PC-9 (cell line): ENCODE measurements at regions of chr1 and their contacts with region 1.

Region 1: DNA sequence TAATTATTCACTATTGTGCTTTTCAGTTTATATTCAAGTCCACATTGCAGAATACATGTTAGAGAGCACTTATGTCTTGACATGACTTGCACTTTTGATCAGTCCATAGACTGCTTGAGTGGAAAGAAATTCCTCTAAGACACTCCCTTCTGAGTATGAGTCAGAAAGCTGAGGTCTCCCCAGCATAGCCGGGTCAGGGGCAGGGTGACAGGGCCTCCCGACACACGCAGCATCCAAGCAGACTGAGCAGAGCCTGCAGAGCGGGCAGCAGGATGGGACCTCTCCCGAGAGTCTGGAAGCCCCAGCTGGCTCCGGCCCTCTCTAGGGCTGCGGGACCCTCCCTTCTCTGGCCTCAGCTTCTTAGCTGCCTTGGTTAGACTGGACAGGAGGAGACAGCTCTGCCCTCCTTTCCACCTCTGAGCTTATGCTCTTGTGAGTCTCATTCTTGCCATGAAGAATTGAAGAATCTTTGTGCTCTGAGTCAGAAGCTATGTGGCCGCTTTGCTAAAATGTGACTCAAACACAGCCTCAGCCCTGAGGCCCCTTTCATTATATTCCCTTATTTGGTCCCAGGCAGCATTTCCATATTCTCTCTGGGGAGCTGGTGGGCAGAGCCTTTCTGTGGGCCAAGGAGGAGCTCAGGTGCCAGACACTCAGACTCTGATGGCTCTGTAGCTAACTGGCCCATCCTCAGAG is 11.2 kb upstream of the CAPN2 start:
- DNase-seq: peak; percentile 91 to 97
- H3K4me3 ChIP-seq: peak overlapping the region; percentile 47; the same call in 1 of the 2 replicates
- H3K27ac ChIP-seq: peak overlapping the region; percentile 100
- H3K4me1 ChIP-seq: peaks cover 75% of the 10 kb centered on the region
- H3K27me3 ChIP-seq: no peaks in the 10 kb centered on the region
- CTCF ChIP-seq: no peak

Region 2: DNA sequence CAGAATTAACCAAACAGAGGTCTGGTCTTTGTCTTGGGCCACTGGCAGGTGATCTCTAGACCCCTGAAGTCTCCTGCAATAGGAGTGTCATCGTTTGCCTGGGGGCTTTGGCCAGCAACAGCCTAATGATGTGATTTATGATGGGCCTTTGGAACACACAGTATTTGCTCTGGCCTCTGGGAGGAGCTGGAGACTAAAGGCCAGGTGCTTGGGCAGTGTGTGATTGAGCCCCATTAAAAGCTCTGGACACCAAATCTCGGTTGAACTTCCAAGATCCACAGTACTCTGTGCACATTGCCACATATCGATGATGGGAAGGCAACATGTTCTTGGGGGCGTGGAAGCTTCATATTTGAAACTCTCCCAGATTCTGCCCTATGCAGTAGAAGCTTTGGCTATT is 526.1 kb before region 1 on chr1:
- CTCF ChIA-PET with region 1: no interaction called
- POLR2A ChIA-PET with region 1: no interaction called
- intact Hi-C with region 1: no loop called
- DNase-seq: no peak
- H3K4me3 ChIP-seq: no peak overlapping the region
- H3K27ac ChIP-seq: no peak overlapping the region
- H3K4me1 ChIP-seq: peaks cover 16% of the 10 kb centered on the region
- H3K27me3 ChIP-seq: no peaks in the 10 kb centered on the region
- CTCF ChIP-seq: peak; percentile 50

Region 3: DNA sequence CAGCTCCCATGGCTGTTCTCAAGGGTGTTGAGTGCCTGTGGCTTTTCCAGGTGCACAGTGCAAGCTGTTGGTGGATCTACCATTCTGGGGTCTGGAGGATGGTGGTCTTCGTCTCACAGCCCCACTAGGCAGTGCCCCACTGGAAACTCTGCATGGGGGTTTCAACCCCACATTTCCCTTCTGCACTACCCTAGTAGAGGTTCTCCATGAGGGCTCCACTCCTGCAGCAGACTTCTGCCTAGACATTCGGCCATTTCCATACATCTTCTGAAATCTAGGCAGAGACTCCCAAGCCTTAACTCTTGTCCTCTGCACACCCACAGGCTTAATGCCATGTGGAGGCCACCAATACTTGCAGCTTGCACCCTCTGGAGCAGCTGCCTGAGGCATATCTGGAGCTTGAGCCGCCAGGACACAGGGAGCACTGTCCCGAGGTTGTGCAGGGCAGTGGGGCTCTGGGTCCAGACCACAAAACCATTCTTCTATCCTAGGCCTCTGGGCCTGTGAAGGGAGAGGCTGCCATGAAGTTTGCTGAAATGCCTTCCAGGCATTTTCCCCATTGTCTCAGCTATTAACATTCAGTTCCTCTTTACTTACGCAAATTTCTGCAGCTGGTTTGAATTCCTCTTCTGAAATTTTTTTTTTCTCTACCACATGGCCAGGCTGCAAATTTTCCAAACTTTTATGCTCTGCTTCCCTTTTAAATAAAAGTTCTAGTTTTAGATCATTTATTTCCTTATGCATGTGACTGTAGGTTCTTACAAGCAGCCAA is 26.8 kb before region 1 on chr1:
- CTCF ChIA-PET with region 1: no interaction called
- POLR2A ChIA-PET with region 1: no interaction called
- intact Hi-C with region 1: no loop called
- DNase-seq: no peak
- H3K4me3 ChIP-seq: no peak overlapping the region
- H3K27ac ChIP-seq: no peak overlapping the region
- H3K4me1 ChIP-seq: peaks cover 20% of the 10 kb centered on the region
- H3K27me3 ChIP-seq: no peaks in the 10 kb centered on the region
- CTCF ChIP-seq: no peak

Region 4: DNA sequence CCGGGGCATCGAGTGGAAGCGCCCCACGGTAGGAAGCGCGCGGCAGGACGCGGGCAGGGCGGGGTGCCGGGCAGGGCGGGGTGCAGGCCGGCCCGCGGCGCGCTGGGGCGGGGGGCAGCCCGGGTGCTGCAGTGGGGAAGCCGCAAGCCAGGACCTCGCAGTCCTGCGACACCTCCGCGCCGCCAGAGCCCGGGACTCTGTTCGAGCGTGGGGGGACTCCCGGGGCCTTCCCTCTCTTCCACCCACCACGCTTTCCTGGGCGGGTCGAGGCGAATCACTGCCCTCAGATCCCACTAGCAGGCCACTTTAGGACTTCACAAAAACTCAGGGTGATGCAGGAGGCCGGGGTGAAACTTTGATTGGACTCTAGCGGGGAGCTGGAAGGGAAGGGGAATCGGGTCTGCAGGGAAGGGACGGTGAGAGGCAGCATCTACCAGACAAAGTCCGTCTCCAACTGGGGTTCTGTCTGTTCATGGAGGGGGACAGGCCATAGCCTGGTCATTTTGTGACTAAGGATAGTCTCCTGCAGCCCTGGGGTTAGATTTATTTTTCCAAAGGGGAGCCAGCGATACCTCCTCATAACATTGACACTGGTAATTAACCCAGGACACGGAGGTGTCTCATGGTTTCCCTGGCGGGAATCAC is 11.9 kb after region 1 on chr1:
- CTCF ChIA-PET with region 1: interaction called, 6 read pairs
- POLR2A ChIA-PET with region 1: interaction called, 12 read pairs
- intact Hi-C with region 1: loop called (anchors 1 kb)
- DNase-seq: peak in 1 of 2 experiments; percentile 32
- H3K4me3 ChIP-seq: peak overlapping the region; percentile 79
- H3K27ac ChIP-seq: peak overlapping the region; percentile 92
- H3K4me1 ChIP-seq: peaks cover 78% of the 10 kb centered on the region
- H3K27me3 ChIP-seq: no peaks in the 10 kb centered on the region
- CTCF ChIP-seq: no peak

Region 5: GRCh38 chr1:223732992-223733798 is 32.1 kb after region 1 on chr1:
- CTCF ChIA-PET with region 1: interaction called, 4 read pairs
- POLR2A ChIA-PET with region 1: interaction called, 13 read pairs
- intact Hi-C with region 1: no loop called
- DNase-seq: no peak
- H3K4me3 ChIP-seq: no peak overlapping the region
- H3K27ac ChIP-seq: 0 out of 2 replicates have a peak overlapping the region, but pooled peaks have one; percentile 12
- H3K4me1 ChIP-seq: peaks cover 37% of the 10 kb centered on the region
- H3K27me3 ChIP-seq: no peaks in the 10 kb centered on the region
- CTCF ChIP-seq: no peak

Region 6: GRCh38 chr1:223771814-223772770 is 71.0 kb after region 1 on chr1:
- CTCF ChIA-PET with region 1: interaction called, 3 read pairs
- POLR2A ChIA-PET with region 1: interaction called, 29 read pairs
- intact Hi-C with region 1: loop called (anchors 2 kb)
- DNase-seq: peak; percentile 87 to 90
- H3K4me3 ChIP-seq: peak overlapping the region; percentile 9; the same call in 1 of the 2 replicates
- H3K27ac ChIP-seq: peak overlapping the region; percentile 90
- H3K4me1 ChIP-seq: peaks cover 82% of the 10 kb centered on the region
- H3K27me3 ChIP-seq: no peaks in the 10 kb centered on the region
- CTCF ChIP-seq: no peak

Region 7: DNA sequence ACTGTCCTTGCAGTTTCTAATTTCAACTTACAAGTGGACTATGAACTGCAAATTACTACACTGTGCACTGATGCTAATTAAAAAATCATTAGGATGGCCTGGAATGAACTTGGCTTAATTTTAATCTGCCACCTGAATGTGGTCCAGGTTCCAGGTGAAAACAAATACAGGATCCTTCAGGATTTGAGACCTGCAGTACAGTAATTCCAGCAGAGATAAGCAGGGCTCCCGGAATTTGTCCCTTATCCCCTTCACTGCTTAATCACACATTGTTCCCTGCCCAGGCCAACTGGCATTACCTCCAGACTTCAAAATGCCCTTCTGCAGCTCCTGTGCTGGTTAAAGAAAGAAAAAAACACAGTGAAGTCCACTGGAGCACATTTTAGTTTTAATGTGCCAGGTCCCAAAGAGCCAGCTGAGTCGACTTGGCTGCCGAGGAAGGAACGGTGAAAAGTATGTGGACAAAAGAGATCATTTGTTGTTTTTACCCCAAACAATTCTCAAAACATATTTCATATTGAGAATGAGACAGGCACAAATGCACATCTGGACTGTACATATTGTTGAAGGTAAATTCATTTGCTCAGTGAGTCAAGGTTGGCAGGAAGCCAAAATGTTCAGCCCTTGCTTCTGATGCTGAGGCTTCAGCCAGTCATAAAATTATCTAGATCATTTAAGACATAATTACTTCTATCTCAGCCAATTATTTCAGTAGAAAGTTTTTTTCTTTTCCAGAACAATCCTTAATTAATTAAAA is 510.3 kb after region 1 on chr1:
- CTCF ChIA-PET with region 1: no interaction called
- POLR2A ChIA-PET with region 1: interaction called, 3 read pairs
- intact Hi-C with region 1: loop called (anchors 5 kb)
- DNase-seq: peak in 1 of 2 experiments; percentile 64
- H3K4me3 ChIP-seq: no peak overlapping the region
- H3K27ac ChIP-seq: peak overlapping the region; percentile 80
- H3K4me1 ChIP-seq: peaks cover 41% of the 10 kb centered on the region
- H3K27me3 ChIP-seq: no peaks in the 10 kb centered on the region
- CTCF ChIP-seq: no peak

Region 8: GRCh38 chr1:224914292-224914900 is 1213.3 kb after region 1 on chr1:
- CTCF ChIA-PET with region 1: no interaction called
- POLR2A ChIA-PET with region 1: interaction called, 10 read pairs
- intact Hi-C with region 1: no loop called
- DNase-seq: no peak
- H3K4me3 ChIP-seq: no peak overlapping the region
- H3K27ac ChIP-seq: no peak overlapping the region
- H3K4me1 ChIP-seq: no peaks in the 10 kb centered on the region
- H3K27me3 ChIP-seq: no peaks in the 10 kb centered on the region
- CTCF ChIP-seq: no peak